HepG2 (cell line): ENCODE measurements at regions of chr22 and their contacts with region 1.

Region 1: GRCh38 chr22:17761138-17761488 is 13.2 kb downstream of the BID start:
- DNase-seq: peak; percentile 73
- ATAC-seq: peak; percentile 86
- H3K4me3 ChIP-seq: peak overlapping the region; percentile 23 to 46 (median 32); a peak in 5 of 6 replicates
- H3K27ac ChIP-seq: peak overlapping the region; percentile 79
- H3K4me1 ChIP-seq: peaks cover 48% of the 10 kb centered on the region
- H3K27me3 ChIP-seq: no peaks in the 10 kb centered on the region
- CTCF ChIP-seq: no peak
- EP300 ChIP-seq: peak in 1 of 2 experiments; percentile 51; a peak in 2 of 4 replicates
- POLR2A ChIP-seq: no peak
- RAD21 ChIP-seq: no peak

Region 2: GRCh38 chr22:17742527-17742902 is 18.6 kb before region 1 on chr22:
- CTCF ChIA-PET with region 1: no interaction called
- POLR2A ChIA-PET with region 1: no interaction called
- in situ Hi-C with region 1: no loop called
- intact Hi-C with region 1: no loop called
- DNase-seq: peak; percentile 63
- ATAC-seq: peak; percentile 93
- H3K4me3 ChIP-seq: no peak overlapping the region
- H3K27ac ChIP-seq: no peak overlapping the region
- H3K4me1 ChIP-seq: no peaks in the 10 kb centered on the region
- H3K27me3 ChIP-seq: no peaks in the 10 kb centered on the region
- CTCF ChIP-seq: peak; percentile 90
- EP300 ChIP-seq: no peak
- POLR2A ChIP-seq: no peak
- RAD21 ChIP-seq: peak; percentile 91

Region 3: DNA sequence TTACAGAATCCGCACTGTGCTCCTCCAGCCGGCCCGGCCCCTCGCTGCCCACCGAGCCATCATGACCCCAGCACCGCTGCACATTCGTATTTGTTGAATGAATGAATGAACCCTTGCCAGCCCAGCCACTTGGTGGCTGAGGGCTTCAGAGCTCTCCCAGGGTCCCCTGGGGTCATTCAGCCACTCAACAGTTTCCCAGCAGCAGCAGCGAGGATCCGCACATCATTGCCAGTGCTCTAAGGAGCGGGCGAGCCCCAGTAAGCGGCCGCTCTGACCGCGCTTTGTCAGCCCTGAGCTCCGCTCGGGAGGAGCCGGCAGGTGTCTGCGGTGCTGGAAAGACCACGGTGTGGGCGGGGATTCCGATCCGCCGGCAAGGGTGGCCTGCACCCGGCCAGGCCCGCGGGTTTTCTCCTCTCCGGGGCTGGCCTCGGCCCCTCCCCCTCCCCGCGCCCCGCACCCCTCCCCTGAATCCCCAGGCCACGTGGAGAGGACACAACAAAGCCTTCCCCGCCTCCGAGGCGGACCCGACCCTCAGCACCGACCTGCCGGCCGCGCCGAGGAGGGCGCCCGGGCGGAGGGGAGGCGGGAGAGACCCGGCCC is 12.6 kb after region 1 on chr22:
- CTCF ChIA-PET with region 1: no interaction called
- POLR2A ChIA-PET with region 1: interaction called, 19 read pairs
- in situ Hi-C with region 1: no loop called
- intact Hi-C with region 1: no loop called
- DNase-seq: peak; percentile 35
- ATAC-seq: peak; percentile 79
- H3K4me3 ChIP-seq: peak overlapping the region; percentile 63 to 89 (median 83)
- H3K27ac ChIP-seq: peak overlapping the region; percentile 62
- H3K4me1 ChIP-seq: peaks cover 61% of the 10 kb centered on the region
- H3K27me3 ChIP-seq: no peaks in the 10 kb centered on the region; a peak in 1 of 5 replicates
- CTCF ChIP-seq: no peak
- EP300 ChIP-seq: no peak
- POLR2A ChIP-seq: peak; percentile 36 to 57; a peak in 3 of 4 replicates
- RAD21 ChIP-seq: no peak

Region 4: DNA sequence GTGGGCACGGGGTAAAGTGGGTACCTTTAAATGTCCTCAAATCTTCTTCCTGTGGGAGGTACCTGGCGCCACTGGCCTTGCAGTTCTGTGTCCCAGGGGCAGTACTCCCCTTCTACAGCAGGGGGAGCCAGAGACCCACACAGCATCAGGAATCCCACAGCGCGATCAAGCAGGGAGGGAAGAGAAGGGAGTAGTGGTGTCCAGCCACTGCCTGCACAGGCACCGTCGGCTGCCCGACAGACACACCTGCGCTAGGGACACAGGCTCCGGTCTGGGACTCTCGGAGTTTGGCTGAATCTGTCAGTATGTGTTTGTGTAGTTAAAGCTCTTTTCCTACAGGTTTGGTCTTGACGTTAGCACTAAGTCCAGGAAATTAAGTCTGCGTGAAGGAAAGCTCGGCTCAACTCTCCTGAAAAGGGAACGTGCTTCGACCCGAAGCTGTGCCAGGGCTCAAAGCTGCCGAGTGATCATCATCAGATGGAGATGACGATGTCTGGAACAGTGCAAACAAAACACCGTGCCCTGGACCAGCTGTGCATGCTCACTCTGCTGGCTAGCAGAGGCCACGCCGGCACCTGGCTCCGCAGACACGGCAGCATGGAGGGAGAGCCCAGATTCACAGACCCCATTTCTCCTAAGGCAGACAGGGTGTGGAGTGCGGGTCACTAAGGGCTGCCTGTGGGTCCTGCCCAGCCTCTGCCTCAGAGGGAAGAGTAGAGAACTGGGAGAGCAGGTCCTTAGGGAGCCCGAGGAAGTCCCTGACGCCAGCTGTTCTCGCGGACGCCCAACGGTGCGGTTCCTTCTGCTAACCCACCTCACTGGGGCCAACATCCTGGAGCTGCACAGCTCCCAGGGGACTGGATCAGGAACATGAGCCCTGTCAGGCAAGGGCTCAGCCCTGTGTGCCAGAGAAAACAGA is 69.2 kb after region 1 on chr22:
- CTCF ChIA-PET with region 1: no interaction called
- POLR2A ChIA-PET with region 1: no interaction called
- in situ Hi-C with region 1: no loop called
- intact Hi-C with region 1: no loop called
- DNase-seq: peak; percentile 63
- ATAC-seq: peak; percentile 93
- H3K4me3 ChIP-seq: no peak overlapping the region
- H3K27ac ChIP-seq: no peak overlapping the region
- H3K4me1 ChIP-seq: no peaks in the 10 kb centered on the region
- H3K27me3 ChIP-seq: no peaks in the 10 kb centered on the region
- CTCF ChIP-seq: peak; percentile 98
- EP300 ChIP-seq: no peak
- POLR2A ChIP-seq: no peak
- RAD21 ChIP-seq: peak; percentile 94

Region 5: DNA sequence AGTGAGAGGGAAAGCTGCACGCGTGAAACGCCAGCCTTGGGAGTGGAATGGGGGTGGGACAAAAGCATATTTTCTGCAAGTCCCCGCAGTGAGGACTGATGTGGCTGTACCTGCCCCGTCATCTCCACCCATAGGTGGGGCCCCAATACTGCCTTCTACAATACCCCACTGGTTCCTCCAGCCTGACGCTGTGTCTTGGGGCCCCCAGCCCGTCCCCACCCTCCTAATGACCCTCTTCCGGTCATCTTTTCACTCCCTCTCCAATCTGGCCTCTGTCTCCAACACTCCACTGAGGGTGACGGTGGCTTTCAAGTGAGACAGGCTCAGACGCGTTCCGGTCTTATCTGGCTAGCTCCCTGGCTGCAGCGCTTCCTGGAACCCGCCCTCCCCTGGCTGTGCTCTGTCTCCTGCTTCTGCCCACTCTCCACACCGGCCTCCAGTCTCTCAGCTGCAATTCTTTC is 159.1 kb after region 1 on chr22:
- CTCF ChIA-PET with region 1: no interaction called
- POLR2A ChIA-PET with region 1: no interaction called
- in situ Hi-C with region 1: no loop called
- intact Hi-C with region 1: no loop called
- DNase-seq: peak; percentile 70
- ATAC-seq: peak; percentile 96
- H3K4me3 ChIP-seq: peak overlapping the region; percentile 14 to 42 (median 40); a peak in 3 of 6 replicates
- H3K27ac ChIP-seq: no peak overlapping the region
- H3K4me1 ChIP-seq: peaks cover 76% of the 10 kb centered on the region
- H3K27me3 ChIP-seq: no peaks in the 10 kb centered on the region
- CTCF ChIP-seq: peak; percentile 66
- EP300 ChIP-seq: no peak; a peak in 1 of 4 replicates
- POLR2A ChIP-seq: no peak
- RAD21 ChIP-seq: peak; percentile 42; the same call in 1 of the 2 replicates